Gastrocnemius medialis (tissue), 4 donors: ENCODE measurements at regions of chr12 and their contacts with region 1.

Region 1: GRCh38 chr12:65169320-65170208 is at the start of gene LEMD3:
- DNase-seq: peak; percentile 88 to 89
- ATAC-seq: peak; percentile 93
- H3K4me3 ChIP-seq: peak within 1 kb of the TSS; percentile 79 to 97 (median 88)
- H3K27ac ChIP-seq: peak within 1 kb of the TSS; percentile 91 to 99 (median 98)
- H3K4me1 ChIP-seq: peaks cover 38 to 39% of the 10 kb centered on the region in 2 donors
- H3K27me3 ChIP-seq: peaks cover 0 to 3% (median 3%) of the 10 kb centered on the region in 3 donors
- CTCF ChIP-seq: no peak
- POLR2A ChIP-seq: peak; percentile 79 to 91
- total RNA-seq, gene LEMD3: 14.0 to 29.4 (median 14.7) TPM

Region 2: DNA sequence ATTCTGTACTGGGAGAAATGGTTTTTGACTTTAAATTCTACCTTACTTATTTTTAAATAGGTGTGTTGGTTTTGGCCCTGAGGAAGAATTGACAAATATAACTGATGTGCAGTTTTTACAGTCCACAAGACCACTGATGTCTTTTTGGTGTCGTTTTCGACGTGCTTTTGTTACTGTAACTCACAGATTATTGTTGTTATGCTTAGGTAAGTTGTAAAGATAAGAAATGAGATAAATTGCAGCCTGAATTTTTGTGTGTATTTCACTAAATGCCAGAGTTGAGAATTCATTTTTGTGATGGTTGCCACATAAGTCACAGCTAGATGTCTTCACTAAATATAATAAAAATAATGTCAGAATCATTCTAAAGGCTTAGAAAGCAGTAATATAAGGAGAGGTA is 69.0 kb after region 1 on chr12:
- in situ Hi-C with region 1: no loop called
- intact Hi-C with region 1: no loop called
- DNase-seq: no peak
- ATAC-seq: no peak
- H3K4me3 ChIP-seq: no peak overlapping the region
- H3K27ac ChIP-seq: no peak overlapping the region
- H3K4me1 ChIP-seq: no peaks in the 10 kb centered on the region
- H3K27me3 ChIP-seq: no peaks in the 10 kb centered on the region
- CTCF ChIP-seq: no peak
- POLR2A ChIP-seq: no peak

Region 3: DNA sequence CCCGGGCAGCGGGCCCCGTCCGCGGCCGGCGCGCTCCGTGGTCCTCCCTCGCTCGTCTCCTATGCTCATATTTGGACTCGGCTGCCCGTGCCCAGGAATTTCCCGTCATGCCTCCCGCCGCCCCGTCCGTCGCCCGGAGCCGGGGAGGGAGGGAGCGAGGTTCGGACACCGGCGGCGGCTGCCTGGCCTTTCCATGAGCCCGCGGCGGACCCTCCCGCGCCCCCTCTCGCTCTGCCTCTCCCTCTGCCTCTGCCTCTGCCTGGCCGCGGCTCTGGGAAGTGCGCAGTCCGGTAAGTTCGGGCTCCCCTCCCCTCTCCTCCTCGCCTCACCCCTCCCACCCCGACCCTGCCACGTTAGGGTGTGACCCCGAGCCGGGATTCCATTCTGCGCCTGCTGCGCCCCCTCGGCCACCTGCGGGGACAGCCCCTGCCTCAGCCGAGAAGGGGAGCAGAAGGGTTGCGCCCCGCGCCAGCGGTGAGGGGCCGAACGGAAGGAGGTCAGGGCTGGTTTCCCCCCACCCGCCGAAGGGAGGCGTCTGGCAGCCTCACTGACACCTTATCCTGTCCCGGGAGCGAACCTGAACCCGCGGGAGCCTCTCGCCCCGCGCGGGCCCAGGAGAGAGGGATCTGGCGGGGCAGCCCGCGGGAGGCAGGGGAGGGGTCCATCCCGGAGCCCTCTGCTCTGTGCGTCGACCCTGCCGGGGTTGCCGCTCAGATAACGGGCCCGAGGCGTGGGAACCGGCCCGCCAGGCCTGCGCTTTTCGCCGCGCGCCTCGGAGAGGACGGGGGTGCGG is 109.2 kb after region 1 on chr12 and contains the start of gene MSRB3:
- in situ Hi-C with region 1: no loop called
- intact Hi-C with region 1: loop called (anchors 1 kb)
- DNase-seq: peak; percentile 58 to 78
- ATAC-seq: peak; percentile 91 to 95
- H3K4me3 ChIP-seq: peak within 1 kb of the TSS; percentile 89 to 99 (median 96)
- H3K27ac ChIP-seq: peak within 1 kb of the TSS; percentile 93 to 96 (median 94)
- H3K4me1 ChIP-seq: peaks cover 28 to 31% of the 10 kb centered on the region in 2 donors
- H3K27me3 ChIP-seq: no peaks in the 10 kb centered on the region
- CTCF ChIP-seq: peak in 1 of 5 experiments; percentile 24
- POLR2A ChIP-seq: peak; percentile 67 to 69
- total RNA-seq, gene MSRB3: 29.0 to 59.0 (median 47.3) TPM